ENCODE measurements at regions of chr1 and their contacts with region 1.

Region 1: DNA sequence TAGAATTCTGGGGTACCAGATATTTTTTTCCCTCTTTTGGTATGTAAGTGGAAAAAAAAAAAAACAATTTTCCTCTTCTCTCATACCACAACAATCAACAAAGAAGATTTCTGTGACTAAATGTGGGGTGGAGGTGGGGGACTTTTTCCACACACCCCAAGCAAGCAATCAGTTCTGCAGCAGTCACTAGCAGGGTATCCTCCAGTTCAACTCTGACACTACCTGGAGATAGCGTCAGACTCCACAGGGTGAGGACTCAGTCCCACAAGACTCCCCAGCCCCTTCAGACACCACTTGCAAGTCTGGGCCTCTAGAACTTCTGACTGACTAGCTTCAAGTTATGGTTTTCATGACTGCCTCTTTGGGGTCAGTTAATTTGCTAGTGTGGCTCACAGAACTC is 6.2 kb downstream of the DHX9 start:
- DNase-seq: no peak
- ATAC-seq: no peak
- H3K4me3 ChIP-seq: no peak overlapping the region
- H3K27ac ChIP-seq: no peak overlapping the region
- H3K4me1 ChIP-seq: peaks cover 0 to 45% (median 27%) of the 10 kb centered on the region in 12 donors
- H3K27me3 ChIP-seq: no peaks in the 10 kb centered on the region
- CTCF ChIP-seq: no peak
- POLR2A ChIP-seq: no peak

Region 2: DNA sequence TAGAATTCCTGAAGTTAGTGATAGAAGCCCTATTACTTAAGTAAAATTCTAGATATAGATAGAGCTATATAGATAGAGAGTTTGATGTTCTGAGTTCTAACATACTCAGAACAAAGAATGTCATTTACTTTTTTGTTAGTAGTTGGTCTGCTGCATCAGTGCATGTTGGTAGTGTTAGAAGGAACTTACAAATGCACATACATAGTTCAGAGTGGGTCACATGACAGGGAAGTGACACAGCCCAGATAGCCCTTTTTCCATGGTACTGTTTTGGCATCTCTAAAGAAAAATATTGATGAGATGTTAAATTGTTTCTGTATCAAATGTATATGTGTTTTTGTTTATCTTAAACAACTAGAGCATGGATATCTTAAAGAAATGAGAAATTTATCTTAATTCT is 39.5 kb after region 1 on chr1:
- intact Hi-C with region 1: loop called in 1 of 10 experiments (anchors 5 kb)
- DNase-seq: no peak
- ATAC-seq: no peak
- H3K4me3 ChIP-seq: no peak overlapping the region
- H3K27ac ChIP-seq: no peak overlapping the region
- H3K4me1 ChIP-seq: no peaks in the 10 kb centered on the region
- H3K27me3 ChIP-seq: no peaks in the 10 kb centered on the region
- CTCF ChIP-seq: no peak
- POLR2A ChIP-seq: no peak